ENCODE measurements at regions of chr9 and their contacts with region 1.

Region 1: DNA sequence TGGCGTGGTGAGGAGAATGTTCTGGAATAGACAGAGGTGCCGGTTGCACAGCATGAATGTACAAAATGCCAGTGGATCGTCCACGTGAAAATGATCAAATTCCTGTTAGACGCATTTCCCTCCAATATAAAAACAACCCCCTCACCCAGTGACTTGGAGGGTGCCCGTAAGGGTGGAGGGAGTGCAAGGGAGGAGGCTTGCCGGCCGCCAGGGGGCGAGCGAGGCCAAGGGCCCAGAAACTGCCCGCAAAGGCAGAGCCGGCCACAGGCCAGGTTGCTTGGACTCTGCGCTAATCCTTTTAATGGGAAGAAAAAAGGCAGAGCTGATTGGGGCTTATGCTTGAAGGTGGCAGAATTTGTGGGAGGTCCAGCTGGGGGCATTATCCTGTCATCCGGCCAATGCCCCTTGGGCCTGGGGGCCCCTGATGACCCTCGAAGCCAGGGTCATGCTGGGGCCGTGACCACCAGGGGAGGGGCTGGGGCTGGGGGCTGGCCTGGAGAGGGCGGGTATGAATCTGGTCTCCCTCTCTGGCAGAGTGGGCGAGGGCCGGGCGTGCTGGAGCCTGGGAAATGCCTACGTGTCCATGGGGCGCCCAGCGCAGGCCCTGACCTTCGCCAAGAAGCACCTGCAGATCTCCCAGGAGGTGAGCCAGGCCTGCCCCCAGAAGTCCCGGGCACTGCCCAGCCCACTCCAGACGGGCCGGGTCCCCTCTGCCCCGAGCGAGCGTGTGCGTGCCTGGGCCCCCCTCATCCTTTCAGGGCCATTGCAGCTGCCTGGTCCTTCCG is 12.0 kb downstream of the GPSM1 start:
- DNase-seq: peak in 1 of 2 donors; percentile 80
- ATAC-seq: peak; percentile 72 to 88 (median 74)
- H3K4me3 ChIP-seq: no peak overlapping the region
- H3K27ac ChIP-seq: no peak overlapping the region
- H3K4me1 ChIP-seq: no peaks in the 10 kb centered on the region
- H3K27me3 ChIP-seq: peaks cover 0 to 25% (median 8%) of the 10 kb centered on the region in 3 donors
- CTCF ChIP-seq: peak; percentile 79

Region 2: DNA sequence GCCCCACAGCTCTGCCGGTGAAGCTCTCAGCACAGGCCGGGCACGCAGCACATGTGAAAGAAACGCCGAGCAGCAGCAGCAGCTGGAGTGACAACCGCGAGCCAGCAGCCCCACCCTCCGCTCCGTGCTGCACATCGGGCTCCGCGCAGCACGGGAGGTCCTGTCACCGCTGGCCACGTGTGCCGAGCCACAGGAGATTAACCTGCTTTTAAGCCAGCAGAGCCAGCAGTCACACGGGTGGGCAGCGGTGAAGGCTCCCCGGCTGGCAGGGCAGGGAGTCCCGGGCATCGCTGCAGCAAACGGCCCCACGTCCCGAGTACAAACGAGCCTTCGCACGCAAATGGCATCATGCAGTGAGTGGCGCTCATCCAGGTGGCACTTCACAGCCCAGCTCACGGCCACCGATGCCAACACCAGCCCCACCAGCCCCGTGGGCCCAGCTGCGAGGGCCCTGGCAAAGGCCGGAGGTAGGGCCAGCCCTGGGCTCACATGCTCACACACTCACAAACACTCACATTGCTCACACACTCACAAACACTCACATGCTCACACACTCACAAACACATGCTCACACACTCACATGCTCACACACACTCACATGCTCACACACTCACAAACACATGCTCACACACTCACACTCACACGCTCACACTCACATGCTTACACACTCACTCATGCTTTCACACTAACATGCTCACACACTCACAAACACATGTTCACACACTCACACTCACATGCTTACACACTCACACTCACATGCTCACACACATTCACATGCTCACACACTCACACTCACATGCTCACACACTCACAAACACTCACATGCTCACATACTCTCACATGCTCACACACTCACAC is 46.5 kb before region 1 on chr9:
- intact Hi-C with region 1: no loop called
- DNase-seq: peak; percentile 13 to 46
- ATAC-seq: no peak
- H3K4me3 ChIP-seq: no peak overlapping the region
- H3K27ac ChIP-seq: no peak overlapping the region
- H3K4me1 ChIP-seq: no peaks in the 10 kb centered on the region
- H3K27me3 ChIP-seq: peaks cover 0 to 63% (median 19%) of the 10 kb centered on the region in 3 donors
- CTCF ChIP-seq: no peak

Region 3: GRCh38 chr9:136400038-136400834 is 60.9 kb after region 1 on chr9 and contains the start of gene SNAPC4:
- intact Hi-C with region 1: loop called in 1 of 2 experiments (anchors 1 kb)
- DNase-seq: peak; percentile 87 to 94
- ATAC-seq: peak; percentile 91 to 96 (median 94)
- H3K4me3 ChIP-seq: peak within 1 kb of the TSS; percentile 72
- H3K27ac ChIP-seq: peak within 1 kb of the TSS; percentile 1
- H3K4me1 ChIP-seq: peaks cover 10% of the 10 kb centered on the region
- H3K27me3 ChIP-seq: no peaks in the 10 kb centered on the region
- CTCF ChIP-seq: peak; percentile 94
- total RNA-seq, gene SNAPC4: 3.5 to 4.9 (median 4.5) TPM

Region 4: GRCh38 chr9:136631038-136632000 is 292.0 kb after region 1 on chr9:
- intact Hi-C with region 1: loop called in 1 of 2 experiments (anchors 10 kb)
- DNase-seq: peak; percentile 83 to 88
- ATAC-seq: peak; percentile 83 to 95 (median 90)
- H3K4me3 ChIP-seq: no peak overlapping the region
- H3K27ac ChIP-seq: no peak overlapping the region
- H3K4me1 ChIP-seq: no peaks in the 10 kb centered on the region
- H3K27me3 ChIP-seq: peaks cover 0 to 2% (median 0%) of the 10 kb centered on the region in 3 donors
- CTCF ChIP-seq: peak; percentile 81